Activated T-helper 1 cell treated with anti-CD3 and anti-CD28 coated beads, Interleukin-12 subunit alpha, Interleukin-12 subunit beta, Interleukin-2, Interleukin-4 antibody, amounts not matched to agents 30 ng/mL and 10 ng/mL and 1 ng/mL, durations not matched to agents 14 hours and 24 hours and 36 hours (primary cell): ENCODE measurements at regions of chr6 and their contacts with region 1.

Region 1: GRCh38 chr6:117568831-117569410 is 33.4 kb downstream of the GOPC start:
- DNase-seq: no peak
- H3K4me3 Mint-ChIP-seq: no peak overlapping the region
- H3K27ac Mint-ChIP-seq: no peak overlapping the region
- H3K4me1 Mint-ChIP-seq: peaks cover 4% of the 10 kb centered on the region
- H3K27me3 Mint-ChIP-seq: no peaks in the 10 kb centered on the region

Region 2: DNA sequence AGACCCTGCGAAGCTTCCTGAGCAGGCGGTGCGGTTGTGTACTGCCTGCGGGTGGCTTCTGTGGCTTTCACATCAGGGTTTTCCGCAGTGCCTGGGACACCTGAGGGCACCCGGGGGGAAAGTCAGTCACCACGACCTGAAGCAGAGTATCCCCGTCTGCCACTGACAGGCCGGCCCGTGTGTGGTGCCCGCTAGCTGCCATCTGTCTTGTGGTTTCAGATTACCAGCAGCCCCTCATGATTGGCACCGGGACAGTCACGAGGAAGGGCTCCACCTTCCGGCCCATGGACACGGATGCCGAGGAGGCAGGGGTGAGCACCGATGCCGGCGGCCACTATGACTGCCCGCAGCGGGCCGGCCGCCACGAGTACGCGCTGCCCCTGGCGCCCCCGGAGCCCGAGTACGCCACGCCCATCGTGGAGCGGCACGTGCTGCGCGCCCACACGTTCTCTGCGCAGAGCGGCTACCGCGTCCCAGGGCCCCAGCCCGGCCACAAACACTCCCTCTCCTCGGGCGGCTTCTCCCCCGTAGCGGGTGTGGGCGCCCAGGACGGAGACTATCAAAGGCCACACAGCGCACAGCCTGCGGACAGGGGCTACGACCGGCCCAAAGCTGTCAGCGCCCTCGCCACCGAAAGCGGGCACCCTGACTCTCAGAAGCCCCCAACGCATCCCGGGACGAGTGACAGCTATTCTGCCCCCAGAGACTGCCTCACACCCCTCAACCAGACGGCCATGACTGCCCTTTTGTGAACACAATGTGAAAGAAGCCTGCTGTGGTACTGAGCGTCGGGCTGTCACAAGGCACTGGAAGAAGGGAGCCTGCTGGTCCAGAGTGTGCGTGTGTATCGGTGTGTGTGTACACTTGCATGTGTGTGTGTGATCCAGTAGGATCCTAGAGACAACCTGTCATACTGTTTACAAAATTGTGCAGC is 21.0 kb before region 1 on chr6:
- intact Hi-C with region 1: loop called (anchors 1 kb)
- DNase-seq: peak; percentile 26
- H3K4me3 Mint-ChIP-seq: peak overlapping the region; percentile 77
- H3K27ac Mint-ChIP-seq: peak overlapping the region; percentile 12
- H3K4me1 Mint-ChIP-seq: peaks cover 45% of the 10 kb centered on the region
- H3K27me3 Mint-ChIP-seq: peaks cover 10% of the 10 kb centered on the region

Region 3: DNA sequence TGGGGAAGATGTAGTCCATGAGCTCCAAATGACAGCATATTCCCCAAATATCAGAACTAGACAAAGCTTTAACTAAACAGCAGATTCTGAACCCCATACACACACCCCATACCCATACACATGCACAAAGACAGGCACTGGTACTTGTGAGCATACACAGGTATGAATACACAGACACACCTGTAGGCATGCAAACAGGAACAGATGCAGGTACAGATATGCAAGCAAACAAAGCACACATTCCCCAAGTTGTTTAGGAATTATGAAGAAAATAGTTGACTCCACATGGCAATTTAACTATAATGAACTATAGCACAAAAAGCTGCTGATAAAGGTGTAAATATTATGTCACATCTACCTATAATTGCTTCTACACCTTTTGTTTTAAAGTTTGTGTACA is 16.7 kb after region 1 on chr6:
- intact Hi-C with region 1: no loop called
- DNase-seq: no peak
- H3K4me3 Mint-ChIP-seq: no peak overlapping the region
- H3K27ac Mint-ChIP-seq: no peak overlapping the region
- H3K4me1 Mint-ChIP-seq: no peaks in the 10 kb centered on the region
- H3K27me3 Mint-ChIP-seq: no peaks in the 10 kb centered on the region